Right ventricle myocardium superior (tissue), 1 donor: ENCODE measurements at regions of chr12 and their contacts with region 1.

Region 1: DNA sequence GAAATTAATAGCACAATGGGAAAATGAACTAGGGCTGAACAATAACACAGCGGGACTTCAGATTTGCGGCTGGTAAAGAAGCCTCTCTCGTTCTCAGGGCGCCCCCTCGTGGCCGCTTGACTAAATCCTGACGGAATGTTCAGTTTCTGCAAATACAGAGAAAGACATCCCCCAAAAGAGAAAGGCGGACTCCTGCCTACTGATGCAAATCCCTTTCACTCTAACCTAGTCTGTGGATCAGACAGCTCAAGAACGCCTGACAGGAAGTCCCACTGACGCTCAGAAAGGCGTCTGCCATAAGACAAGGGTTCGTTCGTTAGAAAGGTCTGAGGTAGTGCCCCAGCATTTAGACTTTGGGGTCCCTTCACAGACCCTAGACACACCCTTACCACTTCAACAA is 2.5 kb downstream of the NUAK1 start:
- DNase-seq: peak; percentile 94
- ATAC-seq: peak; percentile 24

Region 2: DNA sequence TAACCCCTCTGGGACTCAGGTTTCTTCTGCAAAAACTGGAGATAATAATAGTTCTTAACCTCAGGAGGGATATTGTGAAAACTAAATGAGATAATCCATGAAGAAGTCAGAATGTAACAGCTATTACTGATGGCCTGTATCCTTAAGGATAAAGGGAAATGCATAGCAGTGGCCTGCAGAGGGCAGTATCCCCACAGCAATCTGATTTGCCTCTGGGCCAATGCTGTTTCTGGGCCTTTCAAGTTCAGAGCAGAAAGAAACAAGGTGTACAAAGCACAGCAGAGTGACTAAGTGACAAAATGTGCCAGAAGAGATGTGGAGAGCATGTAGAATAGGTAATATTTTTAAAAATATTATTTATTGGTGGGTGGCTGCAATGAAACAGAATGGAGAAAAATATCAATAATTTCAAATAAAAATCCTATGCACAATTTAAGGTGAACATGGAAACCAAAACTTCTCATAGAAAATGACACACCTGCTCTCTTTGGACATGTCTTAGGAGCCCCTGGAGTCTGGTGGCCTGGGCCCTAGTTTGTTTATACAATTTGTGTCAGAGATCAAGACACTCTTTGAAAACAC is 715.5 kb before region 1 on chr12:
- intact Hi-C with region 1: loop called (anchors 5 kb)
- DNase-seq: peak; percentile 68
- ATAC-seq: peak; percentile 96

Region 3: DNA sequence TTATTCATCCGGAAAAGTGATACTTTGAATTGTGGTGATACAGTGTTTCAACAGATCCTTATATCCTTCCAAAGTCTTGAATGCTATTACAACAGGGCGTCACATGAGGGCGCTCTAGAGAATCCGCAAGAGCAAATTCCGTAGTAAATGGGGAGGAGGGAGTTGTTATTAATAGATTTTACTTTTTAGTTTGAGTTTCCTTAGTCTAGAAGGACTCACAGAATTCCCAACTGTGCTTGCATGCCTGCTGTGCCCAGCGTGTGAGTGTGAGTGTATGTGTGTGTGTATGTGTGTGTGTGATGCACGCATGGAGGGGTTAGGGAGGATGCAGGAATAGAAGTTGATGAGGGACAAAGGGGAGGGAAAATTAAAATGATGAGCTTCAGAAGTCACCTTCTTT is 430.5 kb before region 1 on chr12:
- intact Hi-C with region 1: loop called (anchors 5 kb)
- DNase-seq: no peak
- ATAC-seq: peak; percentile 77

Region 4: DNA sequence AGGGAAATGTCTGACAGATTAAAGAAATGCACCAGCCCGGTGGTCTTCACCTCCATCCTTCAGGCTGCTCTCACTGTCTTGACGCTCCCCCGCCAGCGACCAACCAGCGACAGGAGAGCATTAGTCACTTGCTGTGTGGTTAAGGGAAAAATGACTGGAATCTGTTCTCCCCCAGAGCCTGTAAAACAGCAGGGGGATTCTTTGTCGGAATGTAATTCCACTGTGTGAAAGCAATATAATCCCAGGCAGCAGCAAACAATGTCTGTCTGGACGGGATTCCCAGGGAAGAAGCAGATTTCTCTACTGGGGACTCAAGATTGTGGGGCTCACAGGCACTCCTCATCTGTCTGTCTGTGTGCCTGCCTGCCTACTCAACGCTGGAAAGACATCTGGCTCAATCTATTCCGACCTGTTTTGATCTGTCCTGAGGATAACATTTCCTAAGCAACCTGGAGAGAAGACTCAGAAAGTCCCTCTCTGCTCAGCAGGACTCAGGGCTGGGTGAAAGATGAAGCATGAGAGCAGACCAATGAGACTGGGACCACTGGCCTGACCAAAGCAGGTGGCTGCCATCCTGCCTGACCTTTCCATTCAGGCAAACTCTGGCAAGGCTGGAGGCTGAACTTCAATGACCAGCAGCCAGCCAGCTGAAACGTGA is 52.1 kb before region 1 on chr12:
- intact Hi-C with region 1: loop called (anchors 10 kb)
- DNase-seq: no peak
- ATAC-seq: no peak

Region 5: GRCh38 chr12:106101803-106102202 is 34.5 kb before region 1 on chr12:
- intact Hi-C with region 1: loop called (anchors 5 kb)
- DNase-seq: no peak
- ATAC-seq: peak; percentile 35